CD8-positive, alpha-beta T cell (primary cell): ENCODE measurements at regions of chr13 and their contacts with region 1.

Region 1: DNA sequence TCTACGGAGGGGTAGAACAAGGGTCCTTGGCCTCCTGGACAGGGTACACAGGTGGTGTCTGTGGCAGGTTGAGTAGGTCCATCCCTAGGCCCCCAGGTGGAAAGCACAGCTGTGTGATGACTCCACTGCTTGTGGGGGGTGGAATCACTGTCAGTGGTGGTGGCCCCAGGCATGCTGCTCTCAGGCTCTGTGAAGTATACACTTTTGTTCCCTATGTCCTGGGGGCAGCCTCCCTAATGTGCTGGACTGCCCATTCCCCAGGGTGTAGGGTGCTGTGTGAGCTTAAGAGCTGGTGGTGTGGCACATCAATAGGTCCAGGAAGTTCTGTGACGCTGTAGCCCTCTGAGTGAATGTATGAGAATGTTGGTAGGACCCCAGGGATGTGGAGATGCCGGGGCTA is 197.2 kb upstream of the SLC10A2 start:
- DNase-seq: no peak
- ATAC-seq: no peak
- H3K4me3 ChIP-seq: no peak overlapping the region
- H3K4me3 Mint-ChIP-seq: no peak overlapping the region
- H3K27ac ChIP-seq: no peak overlapping the region
- H3K27ac Mint-ChIP-seq: no peak overlapping the region
- H3K4me1 ChIP-seq: no peaks in the 10 kb centered on the region
- H3K4me1 Mint-ChIP-seq: no peaks in the 10 kb centered on the region
- H3K27me3 ChIP-seq: no peaks in the 10 kb centered on the region
- H3K27me3 Mint-ChIP-seq: no peaks in the 10 kb centered on the region
- CTCF ChIP-seq: no peak

Region 2: DNA sequence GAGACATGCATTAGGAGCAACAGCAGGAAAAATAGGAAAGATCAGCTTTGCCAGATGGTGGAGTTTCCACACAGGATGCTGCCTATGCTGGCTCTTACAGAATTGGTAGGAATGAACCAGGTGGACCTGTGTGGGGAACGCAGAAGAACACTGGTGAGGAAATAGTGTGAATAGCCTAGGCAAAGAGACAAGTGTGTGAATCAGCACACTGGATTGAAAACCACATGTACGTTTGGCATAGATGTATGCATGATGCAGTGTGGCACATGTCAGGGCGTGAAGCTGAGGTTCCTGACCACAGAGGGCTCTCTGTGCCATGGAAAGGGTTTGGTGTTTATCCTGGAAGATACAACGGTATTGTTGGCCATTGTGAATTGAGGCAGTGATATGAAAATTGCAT is 40.8 kb before region 1 on chr13:
- CTCF ChIA-PET with region 1: no interaction called
- POLR2A ChIA-PET with region 1: no interaction called
- intact Hi-C with region 1: no loop called
- DNase-seq: no peak
- ATAC-seq: no peak
- H3K4me3 ChIP-seq: no peak overlapping the region
- H3K4me3 Mint-ChIP-seq: no peak overlapping the region
- H3K27ac ChIP-seq: no peak overlapping the region
- H3K27ac Mint-ChIP-seq: no peak overlapping the region
- H3K4me1 ChIP-seq: no peaks in the 10 kb centered on the region
- H3K4me1 Mint-ChIP-seq: no peaks in the 10 kb centered on the region
- H3K27me3 ChIP-seq: no peaks in the 10 kb centered on the region
- H3K27me3 Mint-ChIP-seq: no peaks in the 10 kb centered on the region
- CTCF ChIP-seq: no peak

Region 3: DNA sequence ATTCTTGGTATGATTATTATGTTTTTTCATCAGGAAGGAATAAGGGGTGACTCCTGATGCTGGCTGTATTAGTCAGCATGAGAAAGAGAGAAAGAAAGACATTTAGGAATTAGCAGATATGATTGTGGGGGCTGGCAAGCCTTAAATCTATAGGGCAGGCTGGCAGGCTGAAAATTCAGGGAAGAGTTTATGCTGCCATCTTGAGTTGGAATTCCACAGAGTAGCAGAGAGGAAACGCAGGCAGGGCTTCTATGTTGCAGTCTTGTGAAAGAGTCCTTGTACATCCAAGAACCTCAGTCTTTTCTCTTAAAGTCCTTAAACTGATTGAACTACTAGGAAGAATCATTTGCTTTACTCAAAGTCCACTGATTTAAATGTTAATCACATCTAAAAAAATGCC is 65.5 kb after region 1 on chr13:
- CTCF ChIA-PET with region 1: no interaction called
- POLR2A ChIA-PET with region 1: no interaction called
- intact Hi-C with region 1: loop called in 1 of 2 experiments (anchors 10 kb)
- DNase-seq: no peak
- ATAC-seq: no peak
- H3K4me3 ChIP-seq: no peak overlapping the region
- H3K4me3 Mint-ChIP-seq: no peak overlapping the region
- H3K27ac ChIP-seq: no peak overlapping the region
- H3K27ac Mint-ChIP-seq: no peak overlapping the region
- H3K4me1 ChIP-seq: no peaks in the 10 kb centered on the region
- H3K4me1 Mint-ChIP-seq: no peaks in the 10 kb centered on the region
- H3K27me3 ChIP-seq: no peaks in the 10 kb centered on the region
- H3K27me3 Mint-ChIP-seq: no peaks in the 10 kb centered on the region
- CTCF ChIP-seq: no peak